Breast epithelium (tissue), 4 donors: ENCODE measurements at regions of chr17 and their contacts with region 1.

Region 1: DNA sequence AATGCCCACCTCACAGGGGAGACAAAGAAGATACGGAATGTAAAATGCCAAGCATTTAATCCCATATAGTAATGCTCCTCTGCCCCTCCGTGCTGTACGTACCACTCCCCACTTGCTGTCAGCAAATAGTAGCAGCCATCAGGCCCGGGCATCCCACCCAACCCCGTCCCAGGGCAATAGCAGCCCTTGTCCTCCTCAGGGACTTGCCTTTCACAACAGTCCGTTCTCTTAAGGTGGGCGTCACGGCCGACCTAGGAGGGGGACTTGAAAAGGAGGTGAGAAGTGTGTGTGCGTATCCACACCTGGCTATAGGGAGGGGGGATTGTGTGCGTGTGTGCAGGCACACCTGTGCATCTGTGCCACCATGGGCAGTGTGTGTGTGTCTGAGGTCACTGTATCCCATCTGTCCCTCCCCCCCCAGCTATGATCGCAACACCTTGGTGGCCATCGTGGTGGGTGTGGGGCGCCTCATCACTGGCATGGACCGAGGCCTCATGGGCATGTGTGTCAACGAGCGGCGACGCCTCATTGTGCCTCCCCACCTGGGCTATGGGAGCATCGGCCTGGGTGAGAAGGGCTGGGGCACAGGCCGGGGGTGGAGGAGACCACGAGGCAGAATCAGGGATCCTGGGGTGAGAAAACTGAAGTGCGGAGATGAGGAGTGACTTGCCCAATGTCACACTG is 4.0 kb downstream of the FKBP10 start:
- DNase-seq: no peak
- H3K4me3 ChIP-seq: no peak overlapping the region
- H3K27ac ChIP-seq: no peak overlapping the region
- H3K4me1 ChIP-seq: no peaks in the 10 kb centered on the region
- H3K27me3 ChIP-seq: no peaks in the 10 kb centered on the region
- CTCF ChIP-seq: no peak
- POLR2A ChIP-seq: no peak

Region 2: GRCh38 chr17:41860254-41860931 is 43.6 kb after region 1 on chr17:
- intact Hi-C with region 1: no loop called
- DNase-seq: no peak
- H3K4me3 ChIP-seq: no peak overlapping the region
- H3K27ac ChIP-seq: no peak overlapping the region
- H3K4me1 ChIP-seq: peaks cover 9 to 12% of the 10 kb centered on the region in 2 donors
- H3K27me3 ChIP-seq: no peaks in the 10 kb centered on the region
- CTCF ChIP-seq: no peak
- POLR2A ChIP-seq: no peak

Region 3: DNA sequence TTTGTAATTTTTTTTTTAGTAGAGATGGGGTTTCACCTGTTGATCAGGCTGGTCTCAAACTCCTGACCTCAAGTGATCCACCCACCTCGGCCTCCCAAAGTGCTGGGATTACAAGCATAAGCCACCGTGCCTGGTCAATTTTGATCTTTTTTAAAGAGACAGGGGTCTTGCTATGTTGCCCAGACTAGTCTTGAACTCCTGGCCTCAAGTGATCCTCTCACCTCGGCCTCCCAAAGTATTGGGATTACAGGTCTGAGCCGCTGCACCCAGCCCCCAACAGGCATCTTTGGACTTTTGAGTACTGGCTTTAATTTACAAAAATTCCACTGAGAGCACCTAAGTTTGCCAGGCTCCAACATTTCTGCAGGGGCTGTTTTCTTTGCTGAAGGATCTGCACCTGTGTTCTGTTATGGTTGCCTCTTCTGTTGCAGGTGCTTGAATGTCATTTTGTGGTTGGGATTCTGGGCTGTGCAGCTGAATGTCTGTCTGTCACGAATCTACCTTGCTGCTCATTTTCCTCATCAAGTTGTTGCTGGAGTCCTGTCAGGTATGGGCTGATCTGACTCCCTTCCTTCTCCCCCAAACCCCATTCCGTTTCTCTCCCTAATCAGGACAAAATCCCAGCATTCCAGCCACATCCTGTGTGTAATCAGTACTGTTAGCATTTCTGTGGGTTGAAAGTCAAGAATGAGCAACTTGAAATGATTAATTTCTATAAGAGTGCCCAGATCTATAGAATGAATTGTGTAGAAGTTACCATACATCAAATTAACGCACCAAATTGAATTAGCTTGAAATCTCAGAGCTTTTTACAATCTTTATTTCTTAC is 1092.3 kb after region 1 on chr17:
- intact Hi-C with region 1: loop called (anchors 5 kb)
- DNase-seq: no peak
- H3K4me3 ChIP-seq: no peak overlapping the region
- H3K27ac ChIP-seq: no peak overlapping the region
- H3K4me1 ChIP-seq: no peaks in the 10 kb centered on the region
- H3K27me3 ChIP-seq: peaks cover 0 to 5% of the 10 kb centered on the region in 2 donors
- CTCF ChIP-seq: no peak
- POLR2A ChIP-seq: no peak